ENCODE measurements at regions of chr19 and their contacts with region 1.

Region 1: DNA sequence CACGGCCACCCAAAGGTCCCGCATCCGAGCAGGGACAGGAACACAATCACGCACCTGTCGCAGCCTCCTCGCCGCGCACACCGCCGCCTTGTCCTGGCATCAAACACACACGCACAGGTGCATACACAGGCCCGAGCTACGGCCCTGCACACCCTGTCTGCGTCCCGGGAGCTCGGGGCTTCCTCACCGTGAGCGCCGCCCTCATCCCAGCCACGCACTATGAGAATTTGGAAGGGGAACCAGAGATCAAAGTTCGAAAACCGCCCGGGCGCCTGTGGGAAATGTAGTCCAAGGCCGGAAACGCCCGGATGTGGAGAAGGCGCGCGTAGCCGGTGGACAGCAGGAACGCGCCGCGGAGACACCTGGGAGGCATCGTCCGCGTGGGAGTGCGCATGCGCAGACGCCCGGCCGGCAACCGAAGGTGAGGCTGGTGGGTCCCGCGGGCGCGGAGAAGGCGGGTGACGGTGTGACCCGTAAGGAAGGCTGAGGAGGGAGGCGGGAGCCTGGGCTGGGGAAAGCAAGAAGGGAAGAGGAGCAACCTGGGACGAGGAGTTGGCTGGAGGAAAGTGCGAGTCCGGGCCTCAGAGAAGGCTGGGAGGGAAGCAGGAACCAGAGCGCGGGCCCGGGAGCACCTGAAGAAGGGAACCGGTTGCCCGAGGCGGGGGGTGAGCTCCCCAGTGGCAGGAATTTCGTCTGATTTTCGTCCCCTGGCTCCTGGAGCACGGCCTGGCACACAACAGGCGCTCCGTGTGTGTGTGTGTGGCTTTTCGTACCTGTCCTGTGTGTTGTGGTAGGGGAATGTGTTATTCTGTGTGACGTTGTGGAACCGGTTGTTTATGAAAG is at the start of gene ZNF567:
- DNase-seq: peak; percentile 94 to 96 (median 95)
- H3K4me3 ChIP-seq: peak within 1 kb of the TSS; percentile 62 to 80
- H3K4me3 Mint-ChIP-seq: peak within 1 kb of the TSS; percentile 97 to 100 (median 99)
- H3K27ac ChIP-seq: peak within 1 kb of the TSS; percentile 75
- H3K27ac Mint-ChIP-seq: peak within 1 kb of the TSS; percentile 95 to 99 (median 97)
- H3K4me1 ChIP-seq: peaks cover 22% of the 10 kb centered on the region
- H3K4me1 Mint-ChIP-seq: peaks cover 22 to 49% (median 30%) of the 10 kb centered on the region in 4 donors
- H3K27me3 ChIP-seq: no peaks in the 10 kb centered on the region
- H3K27me3 Mint-ChIP-seq: no peaks in the 10 kb centered on the region
- total RNA-seq, gene ZNF567: 17.0 to 19.8 TPM

Region 2: DNA sequence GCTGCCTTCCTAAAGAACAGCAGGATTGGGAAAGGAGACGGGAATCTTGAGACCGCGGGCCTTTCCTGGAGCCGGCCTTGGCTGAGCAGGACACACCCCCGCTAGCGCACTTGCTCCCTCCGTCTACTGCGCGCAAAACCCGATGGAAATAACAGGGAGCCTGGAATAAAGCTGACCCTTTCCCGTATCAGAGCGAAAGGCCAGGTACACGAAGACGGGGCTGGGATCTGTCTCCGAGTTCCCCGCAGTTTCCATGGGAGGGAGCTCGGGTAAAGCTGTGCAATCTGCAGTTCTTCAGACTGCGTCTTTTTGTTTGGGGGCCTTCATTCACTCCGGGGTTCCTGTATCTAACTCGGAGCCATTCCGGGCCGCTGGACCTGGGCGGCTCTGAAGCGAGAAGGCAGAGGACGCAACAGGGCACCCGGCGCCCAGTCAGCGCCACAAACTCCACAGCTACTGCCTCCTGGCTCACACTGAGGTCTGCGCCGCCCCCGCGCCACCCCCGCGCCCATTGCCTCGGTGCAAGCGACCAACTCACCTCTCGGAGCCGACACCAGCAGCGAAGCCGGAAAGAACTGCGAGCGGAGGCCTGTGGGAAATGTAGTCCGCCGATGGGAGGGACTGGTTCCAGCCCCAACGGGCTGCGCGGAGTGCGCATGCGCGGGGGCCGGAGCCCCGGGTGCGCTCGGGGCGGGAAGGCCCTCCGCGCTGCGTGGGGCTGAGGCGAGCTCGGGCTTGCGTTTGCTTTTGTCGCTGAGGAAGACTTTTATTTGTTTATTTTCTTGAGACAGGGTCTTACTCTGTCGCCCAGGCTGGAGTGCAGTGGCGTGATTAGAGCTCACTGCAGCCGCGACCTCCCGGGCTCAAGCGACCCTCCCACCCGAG is 308.6 kb before region 1 on chr19 and contains the start of gene ZFP14:
- CTCF ChIA-PET with region 1: no interaction called
- POLR2A ChIA-PET with region 1: no interaction called
- intact Hi-C with region 1: loop called (anchors 1 kb)
- DNase-seq: peak; percentile 92 to 96 (median 95)
- H3K4me3 ChIP-seq: peak within 1 kb of the TSS; percentile 76 to 87
- H3K4me3 Mint-ChIP-seq: peak within 1 kb of the TSS; percentile 87 to 96 (median 94)
- H3K27ac ChIP-seq: peak within 1 kb of the TSS; percentile 76
- H3K27ac Mint-ChIP-seq: peak within 1 kb of the TSS; percentile 81 to 97 (median 93)
- H3K4me1 ChIP-seq: peaks cover 18% of the 10 kb centered on the region
- H3K4me1 Mint-ChIP-seq: peaks cover 13 to 34% (median 18%) of the 10 kb centered on the region in 4 donors
- H3K27me3 ChIP-seq: no peaks in the 10 kb centered on the region
- H3K27me3 Mint-ChIP-seq: no peaks in the 10 kb centered on the region
- total RNA-seq, gene ZFP14: 20.7 to 21.2 TPM

Region 3: DNA sequence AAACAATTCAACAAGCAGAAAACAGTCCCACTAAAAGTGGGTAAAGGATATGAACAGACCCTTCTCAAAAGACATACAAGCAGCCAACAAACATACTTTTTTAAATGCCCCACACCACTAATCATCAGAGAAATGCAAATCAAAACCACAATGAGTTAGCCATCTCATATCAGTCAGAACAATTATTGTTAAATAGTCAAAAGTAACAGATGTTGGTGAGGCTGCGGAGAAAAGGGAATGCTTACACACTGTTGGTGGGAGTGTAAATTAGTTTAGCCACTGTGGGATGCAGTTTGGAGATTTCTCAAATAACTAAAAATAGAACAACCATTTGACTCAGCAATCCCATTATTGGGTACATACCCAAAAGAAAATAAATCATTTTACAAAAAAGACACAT is 123.0 kb before region 1 on chr19:
- CTCF ChIA-PET with region 1: no interaction called
- POLR2A ChIA-PET with region 1: no interaction called
- intact Hi-C with region 1: no loop called
- DNase-seq: no peak
- H3K4me3 ChIP-seq: no peak overlapping the region
- H3K4me3 Mint-ChIP-seq: peak overlapping the region in 1 of 8 donors; percentile 6
- H3K27ac ChIP-seq: no peak overlapping the region
- H3K27ac Mint-ChIP-seq: no peak overlapping the region
- H3K4me1 ChIP-seq: no peaks in the 10 kb centered on the region
- H3K4me1 Mint-ChIP-seq: peaks cover 6 to 15% (median 9%) of the 10 kb centered on the region in 4 donors
- H3K27me3 ChIP-seq: no peaks in the 10 kb centered on the region
- H3K27me3 Mint-ChIP-seq: no peaks in the 10 kb centered on the region

Region 4: DNA sequence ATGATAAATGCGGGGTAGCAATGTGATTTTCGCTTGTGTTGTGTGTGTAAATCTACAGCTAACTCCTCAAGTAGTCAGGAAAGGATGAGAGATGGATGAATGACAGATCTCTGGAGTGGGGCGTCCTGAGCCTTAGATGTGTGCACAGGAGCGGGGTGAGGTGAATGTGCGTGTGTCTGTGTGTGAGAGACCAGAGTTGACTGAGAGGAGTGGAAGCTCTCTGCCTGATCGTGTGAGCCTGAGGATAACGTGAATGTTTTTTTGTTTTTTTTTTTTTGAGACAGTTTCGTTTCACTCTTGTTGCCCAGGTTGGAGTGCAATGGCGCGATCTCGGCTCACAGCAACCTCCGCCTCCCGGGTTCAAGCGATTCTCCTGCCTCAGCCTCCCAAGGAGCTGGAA is 21.6 kb before region 1 on chr19:
- CTCF ChIA-PET with region 1: no interaction called
- POLR2A ChIA-PET with region 1: interaction called, 4 read pairs
- intact Hi-C with region 1: loop called (anchors 1 kb)
- DNase-seq: no peak
- H3K4me3 ChIP-seq: peak overlapping the region; percentile 76 to 100
- H3K4me3 Mint-ChIP-seq: peak overlapping the region; percentile 94 to 100 (median 99)
- H3K27ac ChIP-seq: peak overlapping the region; percentile 71
- H3K27ac Mint-ChIP-seq: peak overlapping the region in 6 of 7 donors; percentile 5 to 99 (median 94)
- H3K4me1 ChIP-seq: peaks cover 28% of the 10 kb centered on the region
- H3K4me1 Mint-ChIP-seq: peaks cover 24 to 45% (median 31%) of the 10 kb centered on the region in 4 donors
- H3K27me3 ChIP-seq: no peaks in the 10 kb centered on the region
- H3K27me3 Mint-ChIP-seq: no peaks in the 10 kb centered on the region

Region 5: DNA sequence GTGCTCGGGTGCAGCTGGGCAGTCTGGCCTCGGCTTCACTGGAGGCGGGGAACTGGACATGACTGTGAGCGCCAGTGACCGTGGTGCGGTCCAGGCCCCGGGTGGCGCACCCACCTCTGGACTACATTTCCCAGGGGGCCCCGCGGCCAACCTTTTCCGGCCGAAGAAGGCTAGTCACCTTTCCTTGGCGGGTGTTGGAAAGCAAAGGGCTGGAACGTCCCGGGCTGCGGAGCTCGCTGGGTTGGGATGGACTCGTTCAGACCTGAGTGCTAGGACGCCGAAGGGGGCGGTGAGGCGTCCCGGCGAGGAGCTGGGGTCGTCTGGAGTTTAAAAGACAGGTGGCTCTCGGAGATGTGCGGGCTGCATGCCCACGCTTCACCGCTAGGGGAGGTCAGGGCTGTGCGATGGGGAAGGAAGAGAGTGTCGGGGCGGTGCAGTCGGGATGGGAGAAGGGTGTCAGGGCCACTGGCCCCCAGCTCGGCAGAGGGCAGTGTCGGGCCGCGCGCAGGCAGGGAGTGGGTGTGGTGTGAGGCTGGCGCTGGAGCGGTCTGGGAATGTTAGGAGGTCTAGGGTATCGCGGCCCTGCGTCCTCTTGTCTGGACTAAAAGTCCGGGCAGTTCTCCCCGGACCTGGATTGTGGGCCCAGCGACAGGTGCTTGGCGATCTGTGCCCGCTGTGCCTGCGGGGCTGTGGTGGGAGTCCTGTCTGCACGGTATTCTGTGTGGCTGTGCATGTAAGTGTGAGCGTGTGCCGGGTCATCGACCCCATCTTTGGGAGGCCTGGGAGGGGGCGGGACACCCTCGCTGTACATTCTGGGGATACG is 285.8 kb after region 1 on chr19:
- CTCF ChIA-PET with region 1: no interaction called
- POLR2A ChIA-PET with region 1: no interaction called
- intact Hi-C with region 1: loop called (anchors 1 kb)
- DNase-seq: peak; percentile 76 to 85 (median 77)
- H3K4me3 ChIP-seq: peak overlapping the region; percentile 80 to 86
- H3K4me3 Mint-ChIP-seq: peak overlapping the region; percentile 91 to 98 (median 96)
- H3K27ac ChIP-seq: peak overlapping the region; percentile 68
- H3K27ac Mint-ChIP-seq: peak overlapping the region; percentile 82 to 97 (median 94)
- H3K4me1 ChIP-seq: peaks cover 16% of the 10 kb centered on the region
- H3K4me1 Mint-ChIP-seq: peaks cover 8 to 22% (median 12%) of the 10 kb centered on the region in 4 donors
- H3K27me3 ChIP-seq: no peaks in the 10 kb centered on the region
- H3K27me3 Mint-ChIP-seq: no peaks in the 10 kb centered on the region

Region 6: DNA sequence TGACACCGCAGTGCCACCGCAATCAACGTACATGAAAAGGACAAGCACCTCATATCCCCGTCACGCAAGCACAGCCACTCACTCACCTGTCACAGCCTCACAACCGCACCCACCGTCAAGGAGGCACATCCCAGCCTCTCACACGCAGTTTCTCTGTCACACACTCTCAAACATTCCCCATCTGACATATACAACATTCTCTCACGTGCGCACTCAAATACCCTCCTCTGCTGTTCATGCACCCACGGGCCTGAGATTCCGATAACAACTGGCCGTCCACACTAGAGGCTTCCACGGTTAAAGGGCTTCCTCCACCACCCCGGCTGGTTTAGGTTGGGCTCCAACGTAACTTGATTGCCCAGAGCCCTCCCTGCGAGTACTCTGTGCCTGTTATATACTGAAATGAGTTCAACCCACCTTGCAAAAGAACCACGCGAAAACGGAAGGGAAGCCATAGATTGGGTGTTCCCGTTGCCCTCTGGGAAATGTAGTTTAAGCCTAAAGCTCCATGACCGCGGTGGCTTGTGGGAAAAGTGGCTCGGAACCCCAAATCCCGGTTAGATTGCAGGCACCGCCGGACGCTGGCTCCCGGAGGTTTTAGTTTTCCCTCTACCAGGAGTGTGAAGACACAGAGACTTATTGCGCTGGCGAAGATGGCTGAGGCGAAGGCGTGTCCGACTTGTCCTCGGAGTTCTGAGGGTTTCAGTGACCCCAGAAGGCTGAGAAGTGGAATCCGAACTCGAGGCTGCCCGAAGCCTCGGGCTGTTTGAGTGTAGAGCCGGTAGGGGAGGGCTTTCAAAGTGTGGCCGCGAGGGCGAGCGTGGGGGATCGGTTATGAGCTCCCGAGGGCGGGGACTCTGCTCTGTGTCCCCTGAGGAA is 1091.9 kb after region 1 on chr19 and contains the start of gene ZNF573:
- CTCF ChIA-PET with region 1: no interaction called
- POLR2A ChIA-PET with region 1: no interaction called
- intact Hi-C with region 1: loop called (anchors 5 kb)
- DNase-seq: peak; percentile 87 to 99 (median 91)
- H3K4me3 ChIP-seq: peak within 1 kb of the TSS; percentile 74 to 89
- H3K4me3 Mint-ChIP-seq: peak within 1 kb of the TSS; percentile 90 to 99 (median 94)
- H3K27ac ChIP-seq: peak within 1 kb of the TSS; percentile 90
- H3K27ac Mint-ChIP-seq: peak within 1 kb of the TSS; percentile 86 to 100 (median 98)
- H3K4me1 ChIP-seq: peaks cover 18% of the 10 kb centered on the region
- H3K4me1 Mint-ChIP-seq: peaks cover 24 to 46% (median 35%) of the 10 kb centered on the region in 4 donors
- H3K27me3 ChIP-seq: no peaks in the 10 kb centered on the region
- H3K27me3 Mint-ChIP-seq: no peaks in the 10 kb centered on the region
- total RNA-seq, gene ZNF573: 30.5 to 31.1 TPM